Activated CD8-positive, alpha-beta T cell treated with anti-CD3 and anti-CD28 coated beads for 36 hours (primary cell): ENCODE measurements at regions of chr5 and their contacts with region 1.

Region 1: DNA sequence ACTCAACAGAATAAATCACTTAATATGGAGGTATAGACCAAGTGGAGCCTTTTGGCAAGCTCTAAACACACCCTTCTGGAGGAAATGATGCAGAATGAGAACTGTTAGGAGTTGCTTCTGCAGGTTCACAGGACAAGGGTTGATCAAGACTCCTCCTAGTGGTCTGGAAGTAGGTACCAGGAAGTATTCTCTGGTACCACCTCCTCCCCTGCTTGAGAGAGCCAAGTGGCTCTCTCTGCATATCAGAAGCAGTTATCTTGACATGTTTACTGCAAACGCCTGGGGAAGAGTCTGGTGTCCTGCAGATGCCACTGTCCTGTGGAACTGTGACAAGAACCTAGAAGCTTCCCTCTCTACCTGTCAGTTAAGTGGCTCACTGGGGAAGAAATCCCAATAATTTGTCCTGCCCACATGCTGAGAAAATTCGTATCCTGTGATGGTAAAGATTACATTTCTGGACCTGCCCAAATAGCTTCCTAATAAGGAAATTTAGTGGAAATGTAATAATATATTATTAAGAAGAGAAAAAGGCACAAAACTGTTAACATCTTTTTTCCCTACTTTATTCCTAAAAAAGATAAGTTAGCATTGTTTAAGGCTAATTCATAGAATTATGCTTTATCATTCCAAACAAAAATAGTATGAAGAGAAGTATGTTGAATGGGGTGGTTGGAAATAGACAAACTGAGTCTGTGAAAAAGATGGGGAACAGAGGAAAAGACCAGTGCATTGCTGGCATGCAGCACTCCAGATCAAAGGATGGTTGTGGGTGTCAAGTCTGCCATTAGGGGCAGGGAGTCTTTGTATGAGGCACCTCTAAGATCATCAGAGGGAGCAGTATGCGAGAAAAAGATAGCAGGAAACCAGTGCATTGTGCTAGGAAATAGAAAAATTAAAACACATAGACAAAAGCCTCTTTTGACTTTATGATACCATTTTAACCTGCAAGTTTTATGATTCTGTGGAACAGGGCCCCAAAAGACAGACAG is 118.8 kb downstream of the CDC42SE2 start:
- DNase-seq: peak; percentile 56
- ATAC-seq: peak; percentile 68
- H3K4me3 Mint-ChIP-seq: peak overlapping the region; percentile 47
- H3K27ac Mint-ChIP-seq: peak overlapping the region; percentile 99
- H3K4me1 Mint-ChIP-seq: peaks cover 81% of the 10 kb centered on the region
- H3K27me3 Mint-ChIP-seq: no peaks in the 10 kb centered on the region
- CTCF ChIP-seq: peak; percentile 61

Region 2: GRCh38 chr5:131263648-131264450 is 118.9 kb before region 1 on chr5 and contains the start of gene CDC42SE2:
- CTCF ChIA-PET with region 1: interaction called, 28 read pairs
- POLR2A ChIA-PET with region 1: interaction called, 62 read pairs
- intact Hi-C with region 1: no loop called
- DNase-seq: peak; percentile 83
- ATAC-seq: peak; percentile 87
- H3K4me3 Mint-ChIP-seq: peak within 1 kb of the TSS; percentile 86
- H3K27ac Mint-ChIP-seq: peak within 1 kb of the TSS; percentile 95
- H3K4me1 Mint-ChIP-seq: peaks cover 35% of the 10 kb centered on the region
- H3K27me3 Mint-ChIP-seq: no peaks in the 10 kb centered on the region
- CTCF ChIP-seq: no peak
- total RNA-seq, gene CDC42SE2: 100 to 102 TPM

Region 3: GRCh38 chr5:131281133-131281867 is 101.4 kb before region 1 on chr5:
- CTCF ChIA-PET with region 1: interaction called, 12 read pairs
- POLR2A ChIA-PET with region 1: interaction called, 19 read pairs
- intact Hi-C with region 1: loop called (anchors 2 kb)
- DNase-seq: no peak
- ATAC-seq: peak; percentile 73
- H3K4me3 Mint-ChIP-seq: peak overlapping the region; percentile 74
- H3K27ac Mint-ChIP-seq: peak overlapping the region; percentile 98
- H3K4me1 Mint-ChIP-seq: peaks cover 81% of the 10 kb centered on the region
- H3K27me3 Mint-ChIP-seq: no peaks in the 10 kb centered on the region
- CTCF ChIP-seq: no peak

Region 4: DNA sequence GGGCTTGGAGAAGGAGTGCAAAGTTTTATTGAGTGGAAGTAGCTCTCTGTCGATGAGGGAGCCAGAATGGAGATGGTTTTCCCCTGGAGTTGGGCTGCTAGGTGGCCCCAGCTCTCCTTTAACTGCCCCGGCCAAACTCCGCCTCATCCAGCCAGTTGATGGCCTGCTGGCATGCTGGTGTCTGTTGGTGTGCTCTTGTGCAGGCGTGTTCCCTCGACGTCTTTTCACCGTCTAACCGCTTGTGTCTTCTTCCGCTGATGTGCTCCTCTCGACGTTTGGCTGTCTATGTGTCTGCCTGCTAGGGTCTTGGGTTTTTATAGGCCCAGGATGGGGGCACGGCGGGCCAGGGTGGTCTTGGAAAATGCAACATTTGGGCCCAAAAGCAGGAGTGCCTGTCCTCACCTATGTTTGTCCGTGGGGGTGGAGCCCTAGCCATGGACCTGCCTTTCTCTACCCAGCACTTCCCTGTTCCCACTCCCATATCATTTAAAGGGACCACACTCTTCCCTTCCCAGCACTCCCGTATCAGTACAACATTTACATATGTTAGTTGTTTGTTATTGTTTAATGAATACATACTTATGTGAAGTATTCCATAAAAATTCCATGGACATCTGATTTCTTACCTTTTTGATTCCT is 20.9 kb before region 1 on chr5:
- CTCF ChIA-PET with region 1: interaction called, 7 read pairs
- POLR2A ChIA-PET with region 1: interaction called, 13 read pairs
- intact Hi-C with region 1: no loop called
- DNase-seq: no peak
- ATAC-seq: no peak
- H3K4me3 Mint-ChIP-seq: no peak overlapping the region
- H3K27ac Mint-ChIP-seq: peak overlapping the region; percentile 58
- H3K4me1 Mint-ChIP-seq: peaks cover 73% of the 10 kb centered on the region
- H3K27me3 Mint-ChIP-seq: no peaks in the 10 kb centered on the region
- CTCF ChIP-seq: no peak

Region 5: DNA sequence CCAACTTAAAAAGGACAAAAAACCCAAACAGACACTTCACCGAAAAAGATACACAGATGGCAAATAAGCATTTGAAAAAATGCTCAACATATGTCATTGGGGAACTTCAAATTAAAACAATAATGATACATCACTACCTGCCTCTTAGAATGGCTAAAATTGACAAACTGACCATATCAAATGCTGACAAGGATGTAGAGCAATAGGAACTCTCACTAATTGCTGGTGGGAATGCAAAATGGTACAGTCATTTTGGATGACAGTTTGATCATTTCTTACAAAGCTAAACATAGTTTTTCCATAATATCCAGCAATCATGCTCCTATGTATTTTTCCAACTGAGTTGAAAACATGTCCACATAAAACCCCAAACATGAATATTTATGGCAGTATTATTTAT is 311.2 kb after region 1 on chr5:
- CTCF ChIA-PET with region 1: no interaction called
- POLR2A ChIA-PET with region 1: no interaction called
- intact Hi-C with region 1: no loop called
- DNase-seq: no peak
- ATAC-seq: no peak
- H3K4me3 Mint-ChIP-seq: no peak overlapping the region
- H3K27ac Mint-ChIP-seq: no peak overlapping the region
- H3K4me1 Mint-ChIP-seq: no peaks in the 10 kb centered on the region
- H3K27me3 Mint-ChIP-seq: no peaks in the 10 kb centered on the region
- CTCF ChIP-seq: no peak